PC-9 (cell line): ENCODE measurements at regions of chr2 and their contacts with region 1.

Region 1: GRCh38 chr2:9462313-9462712 is 12.0 kb upstream of the IAH1 start:
- DNase-seq: no peak
- H3K4me3 ChIP-seq: no peak overlapping the region
- H3K27ac ChIP-seq: no peak overlapping the region
- H3K4me1 ChIP-seq: no peaks in the 10 kb centered on the region
- H3K27me3 ChIP-seq: no peaks in the 10 kb centered on the region
- CTCF ChIP-seq: no peak

Region 2: DNA sequence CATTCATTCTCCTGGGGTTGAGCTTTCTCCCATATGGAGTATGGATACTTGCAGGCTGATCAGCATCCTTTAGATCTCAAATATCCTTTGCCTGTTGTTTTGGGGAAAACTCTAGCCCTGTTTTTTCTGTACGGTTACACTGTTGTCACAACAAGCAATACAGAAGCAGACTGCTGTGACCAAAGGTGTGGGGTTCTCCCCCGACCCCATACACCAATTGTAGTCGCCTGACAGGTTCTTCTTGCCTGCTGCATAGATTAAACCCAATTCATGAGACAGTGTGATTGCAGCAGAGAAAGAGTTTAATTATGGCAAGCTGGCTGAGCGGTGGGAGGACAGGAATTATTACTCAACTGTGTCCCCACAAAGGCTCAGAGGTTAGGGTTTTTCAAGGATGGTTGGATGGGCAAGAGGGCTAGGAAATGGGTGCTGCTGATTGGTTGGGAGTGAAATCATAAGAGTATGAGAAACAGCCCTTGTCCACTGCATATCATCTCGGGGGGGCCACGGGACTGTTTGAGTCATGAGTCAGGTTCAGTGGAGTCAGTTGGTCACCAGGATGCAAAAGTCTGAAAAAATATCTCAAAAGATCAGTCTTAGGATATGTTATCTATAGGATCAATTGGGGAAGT is 79.6 kb before region 1 on chr2:
- CTCF ChIA-PET with region 1: no interaction called
- POLR2A ChIA-PET with region 1: no interaction called
- intact Hi-C with region 1: no loop called
- DNase-seq: peak in 1 of 2 experiments; percentile 58
- H3K4me3 ChIP-seq: no peak overlapping the region
- H3K27ac ChIP-seq: peak overlapping the region; percentile 93
- H3K4me1 ChIP-seq: peaks cover 86% of the 10 kb centered on the region
- H3K27me3 ChIP-seq: no peaks in the 10 kb centered on the region
- CTCF ChIP-seq: no peak

Region 3: DNA sequence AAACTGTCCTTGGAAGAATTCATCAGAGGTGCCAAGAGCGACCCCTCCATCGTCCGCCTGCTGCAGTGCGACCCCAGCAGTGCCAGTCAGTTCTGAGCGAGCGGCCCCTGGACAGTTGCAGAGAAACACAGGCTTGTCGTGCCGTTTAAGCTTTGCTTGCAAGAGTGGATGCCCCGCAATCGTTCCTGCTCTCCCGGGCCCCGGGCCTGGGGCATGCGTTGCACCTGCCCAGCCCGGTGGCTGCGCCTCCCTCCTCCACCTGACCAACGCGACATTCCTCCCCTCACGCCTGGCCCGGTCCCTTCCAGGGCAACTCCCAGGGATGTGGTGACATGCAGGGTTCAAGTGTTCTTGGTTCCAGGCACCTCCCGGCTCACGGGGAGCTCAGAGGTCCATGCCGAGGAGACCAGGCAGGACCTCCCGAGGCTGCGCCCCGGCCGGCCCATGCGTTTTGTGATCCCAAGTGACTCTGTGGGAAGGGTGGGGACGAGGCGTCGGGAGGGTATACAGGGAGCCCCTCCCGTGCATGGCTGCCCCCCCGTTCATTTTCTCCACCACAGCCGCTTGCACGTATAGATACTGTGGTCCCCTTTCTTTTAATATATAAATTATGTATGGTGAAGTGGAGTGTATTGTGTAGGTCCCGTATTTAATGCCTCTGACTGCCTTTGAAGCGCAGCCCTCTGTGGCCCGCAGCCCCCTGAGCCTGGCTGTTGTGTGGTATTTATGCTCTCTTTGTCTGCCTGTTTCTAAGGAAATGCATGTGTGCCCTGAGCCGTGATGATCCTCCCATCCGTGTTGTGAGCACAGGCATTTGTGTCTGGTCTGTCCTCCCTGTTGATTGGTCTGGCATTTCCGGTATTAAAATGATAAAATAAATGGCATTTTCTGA is 964.7 kb after region 1 on chr2:
- CTCF ChIA-PET with region 1: interaction called, 19 read pairs
- POLR2A ChIA-PET with region 1: no interaction called
- intact Hi-C with region 1: no loop called
- DNase-seq: no peak
- H3K4me3 ChIP-seq: no peak overlapping the region
- H3K27ac ChIP-seq: no peak overlapping the region
- H3K4me1 ChIP-seq: no peaks in the 10 kb centered on the region
- H3K27me3 ChIP-seq: no peaks in the 10 kb centered on the region
- CTCF ChIP-seq: no peak

Region 4: GRCh38 chr2:10700078-10700803 is 1237.9 kb after region 1 on chr2:
- CTCF ChIA-PET with region 1: no interaction called
- POLR2A ChIA-PET with region 1: no interaction called
- intact Hi-C with region 1: no loop called
- DNase-seq: peak in 1 of 2 experiments; percentile 52
- H3K4me3 ChIP-seq: no peak overlapping the region
- H3K27ac ChIP-seq: no peak overlapping the region
- H3K4me1 ChIP-seq: no peaks in the 10 kb centered on the region
- H3K27me3 ChIP-seq: no peaks in the 10 kb centered on the region
- CTCF ChIP-seq: no peak